ENCODE measurements at regions of chr6 and their contacts with region 1.

Region 1: GRCh38 chr6:105263685-105264610 is 84.1 kb upstream of the POPDC3 start:
- DNase-seq: no peak
- H3K4me3 ChIP-seq: no peak overlapping the region
- H3K27ac ChIP-seq: no peak overlapping the region
- H3K4me1 ChIP-seq: no peaks in the 10 kb centered on the region
- H3K27me3 ChIP-seq: no peaks in the 10 kb centered on the region
- CTCF ChIP-seq: no peak

Region 2: GRCh38 chr6:104969785-104970581 is 294.0 kb before region 1 on chr6:
- CTCF ChIA-PET with region 1: no interaction called
- dilution Hi-C with region 1: no loop called
- in situ Hi-C with region 1: no loop called
- intact Hi-C with region 1: no loop called
- DNase-seq: no peak
- H3K4me3 ChIP-seq: no peak overlapping the region
- H3K27ac ChIP-seq: no peak overlapping the region
- H3K4me1 ChIP-seq: no peaks in the 10 kb centered on the region
- H3K27me3 ChIP-seq: no peaks in the 10 kb centered on the region
- CTCF ChIP-seq: no peak

Region 3: GRCh38 chr6:105067329-105067728 is 196.6 kb before region 1 on chr6:
- CTCF ChIA-PET with region 1: no interaction called
- dilution Hi-C with region 1: no loop called
- in situ Hi-C with region 1: no loop called
- intact Hi-C with region 1: no loop called
- DNase-seq: no peak
- H3K4me3 ChIP-seq: no peak overlapping the region
- H3K27ac ChIP-seq: no peak overlapping the region
- H3K4me1 ChIP-seq: no peaks in the 10 kb centered on the region
- H3K27me3 ChIP-seq: no peaks in the 10 kb centered on the region
- CTCF ChIP-seq: no peak

Region 4: GRCh38 chr6:105152880-105153279 is 111.1 kb before region 1 on chr6:
- CTCF ChIA-PET with region 1: interaction called, 12 read pairs
- dilution Hi-C with region 1: no loop called
- in situ Hi-C with region 1: no loop called
- intact Hi-C with region 1: no loop called
- DNase-seq: no peak
- H3K4me3 ChIP-seq: no peak overlapping the region
- H3K27ac ChIP-seq: no peak overlapping the region
- H3K4me1 ChIP-seq: no peaks in the 10 kb centered on the region
- H3K27me3 ChIP-seq: no peaks in the 10 kb centered on the region
- CTCF ChIP-seq: no peak

Region 5: GRCh38 chr6:105226598-105227294 is 37.2 kb before region 1 on chr6:
- CTCF ChIA-PET with region 1: no interaction called
- dilution Hi-C with region 1: no loop called
- in situ Hi-C with region 1: no loop called
- intact Hi-C with region 1: no loop called
- DNase-seq: no peak
- H3K4me3 ChIP-seq: no peak overlapping the region
- H3K27ac ChIP-seq: no peak overlapping the region
- H3K4me1 ChIP-seq: no peaks in the 10 kb centered on the region
- H3K27me3 ChIP-seq: no peaks in the 10 kb centered on the region
- CTCF ChIP-seq: no peak

Region 6: DNA sequence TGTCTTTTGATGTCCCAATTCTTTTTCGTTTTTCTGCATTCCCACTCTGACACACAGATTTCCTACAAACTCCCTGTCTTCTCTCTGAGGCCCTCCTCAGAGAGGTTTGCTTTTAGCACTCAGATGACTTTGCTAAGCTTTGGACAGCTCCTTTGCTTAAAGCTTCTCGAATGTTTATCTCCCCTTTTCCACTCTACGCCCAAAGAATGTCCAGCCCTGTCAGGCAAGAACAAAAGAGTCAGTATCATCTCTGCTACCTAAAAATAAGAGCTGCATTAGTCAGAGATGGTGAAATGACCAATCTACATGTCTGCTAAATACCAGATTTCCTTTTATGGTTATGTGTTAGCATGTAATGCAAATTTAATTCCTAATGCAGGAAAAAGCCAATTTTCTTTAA is 82.1 kb after region 1 on chr6:
- CTCF ChIA-PET with region 1: no interaction called
- dilution Hi-C with region 1: no loop called
- in situ Hi-C with region 1: no loop called
- intact Hi-C with region 1: no loop called
- DNase-seq: peak; percentile 89
- H3K4me3 ChIP-seq: no peak overlapping the region
- H3K27ac ChIP-seq: peak overlapping the region; percentile 82
- H3K4me1 ChIP-seq: peaks cover 28% of the 10 kb centered on the region
- H3K27me3 ChIP-seq: no peaks in the 10 kb centered on the region
- CTCF ChIP-seq: no peak